ENCODE measurements at regions of chr6 and their contacts with region 1.

Region 1: GRCh38 chr6:125165256-125165655 is 11.7 kb downstream of the TPD52L1 start:
- DNase-seq: no peak
- H3K4me3 ChIP-seq: no peak overlapping the region
- H3K27me3 ChIP-seq: no peaks in the 10 kb centered on the region
- CTCF ChIP-seq: no peak

Region 2: DNA sequence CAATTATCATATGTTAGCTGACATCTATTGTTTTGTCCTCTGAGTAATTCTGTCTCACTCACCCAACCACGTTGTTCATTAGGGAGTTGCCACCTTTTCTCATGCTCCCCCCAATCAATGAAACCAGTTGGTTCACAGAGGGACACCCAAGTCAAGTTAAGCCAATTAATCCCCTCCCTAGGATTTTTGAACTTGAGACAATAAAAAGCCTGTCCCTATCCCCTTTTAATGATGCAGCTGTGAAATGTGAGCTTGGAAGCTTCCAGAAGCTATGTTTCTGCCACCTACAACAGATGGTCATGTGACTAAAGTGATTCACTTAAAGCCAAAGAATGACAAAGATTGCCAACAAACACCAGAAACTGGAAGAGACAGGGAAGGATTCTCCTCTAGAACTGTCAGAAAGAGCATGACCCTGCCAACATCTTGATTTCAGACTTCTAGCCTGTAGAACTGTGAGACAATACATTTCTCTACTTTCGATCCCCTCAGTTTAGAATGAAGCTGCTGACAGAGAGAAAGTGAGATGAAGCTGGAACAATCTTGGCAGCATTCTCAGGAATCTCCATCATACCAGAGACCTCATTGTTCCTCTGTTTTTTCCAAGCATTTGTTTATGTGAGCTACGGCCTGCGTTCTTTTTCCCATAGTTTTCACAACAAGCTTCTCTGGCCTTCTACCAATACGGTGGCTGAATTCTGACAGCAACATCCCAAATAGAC is 69.5 kb before region 1 on chr6:
- CTCF ChIA-PET with region 1: no interaction called
- POLR2A ChIA-PET with region 1: no interaction called
- DNase-seq: peak; percentile 26
- H3K4me3 ChIP-seq: no peak overlapping the region
- H3K27me3 ChIP-seq: no peaks in the 10 kb centered on the region
- CTCF ChIP-seq: no peak

Region 3: GRCh38 chr6:125153391-125154117 is 11.7 kb before region 1 on chr6 and contains the start of gene TPD52L1:
- CTCF ChIA-PET with region 1: interaction called, 50 read pairs
- POLR2A ChIA-PET with region 1: no interaction called
- DNase-seq: no peak
- H3K4me3 ChIP-seq: peak within 1 kb of the TSS; percentile 56
- H3K27me3 ChIP-seq: no peaks in the 10 kb centered on the region; the same call in 1 of the 2 replicates
- CTCF ChIP-seq: peak; percentile 96
- polyA plus RNA-seq, gene TPD52L1: 155 and 163 TPM in 2 replicates